Endothelial cell of umbilical vein (primary cell): ENCODE measurements at regions of chr7 and their contacts with region 1.

Region 1: GRCh38 chr7:137592232-137592896 is 248.8 kb upstream of the PTN start:
- DNase-seq: peak; percentile 85
- H3K4me3 ChIP-seq: no peak overlapping the region
- H3K27ac ChIP-seq: peak overlapping the region; percentile 83
- H3K4me1 ChIP-seq: peaks cover 10% of the 10 kb centered on the region
- H3K27me3 ChIP-seq: peaks cover 0 to 1% of the 10 kb centered on the region in 2 experiments
- CTCF ChIP-seq: peak; percentile 64 to 90
- POLR2A ChIP-seq: no peak

Region 2: GRCh38 chr7:135801045-135801693 is 1791.2 kb before region 1 on chr7:
- CTCF ChIA-PET with region 1: interaction called, 4 read pairs
- POLR2A ChIA-PET with region 1: no interaction called
- dilution Hi-C with region 1: no loop called
- intact Hi-C with region 1: loop called (anchors 5 kb)
- DNase-seq: peak; percentile 66
- H3K4me3 ChIP-seq: no peak overlapping the region
- H3K27ac ChIP-seq: no peak overlapping the region
- H3K4me1 ChIP-seq: no peaks in the 10 kb centered on the region
- H3K27me3 ChIP-seq: peaks cover 0 to 3% of the 10 kb centered on the region in 2 experiments
- CTCF ChIP-seq: peak; percentile 63 to 70
- POLR2A ChIP-seq: no peak

Region 3: DNA sequence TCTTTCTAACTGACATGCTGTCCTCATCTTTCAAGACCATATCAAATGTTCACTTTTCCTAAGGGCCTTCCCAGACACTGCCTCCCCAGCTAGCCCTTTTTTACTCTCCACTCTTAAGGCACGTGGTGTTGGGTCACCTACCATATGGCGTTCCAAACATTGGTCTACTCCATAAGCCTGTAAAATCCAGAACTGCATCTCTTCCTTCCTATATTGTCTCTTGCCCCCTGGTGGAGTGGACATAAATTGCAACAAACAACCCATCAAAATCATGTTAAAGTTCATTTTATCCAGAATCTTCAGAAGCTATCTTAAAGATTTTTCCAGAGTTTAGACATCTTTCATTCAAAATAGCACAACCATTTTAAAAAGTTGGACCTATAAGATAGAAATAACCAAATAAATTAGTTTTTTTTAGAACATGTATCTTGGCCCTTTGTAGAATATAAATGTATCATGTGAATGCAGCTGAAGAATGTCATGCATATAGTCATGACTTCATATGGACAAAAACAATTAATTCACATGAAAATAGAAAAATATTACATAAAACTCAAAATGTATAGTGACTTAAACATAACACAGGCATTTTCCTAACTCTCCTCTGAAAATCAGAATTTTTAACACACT is 904.6 kb before region 1 on chr7:
- CTCF ChIA-PET with region 1: no interaction called
- POLR2A ChIA-PET with region 1: no interaction called
- dilution Hi-C with region 1: no loop called
- intact Hi-C with region 1: loop called (anchors 5 kb)
- DNase-seq: peak; percentile 7
- H3K4me3 ChIP-seq: no peak overlapping the region
- H3K27ac ChIP-seq: no peak overlapping the region
- H3K4me1 ChIP-seq: no peaks in the 10 kb centered on the region
- H3K27me3 ChIP-seq: no peaks in the 10 kb centered on the region
- CTCF ChIP-seq: peak; percentile 30 to 31
- POLR2A ChIP-seq: no peak

Region 4: DNA sequence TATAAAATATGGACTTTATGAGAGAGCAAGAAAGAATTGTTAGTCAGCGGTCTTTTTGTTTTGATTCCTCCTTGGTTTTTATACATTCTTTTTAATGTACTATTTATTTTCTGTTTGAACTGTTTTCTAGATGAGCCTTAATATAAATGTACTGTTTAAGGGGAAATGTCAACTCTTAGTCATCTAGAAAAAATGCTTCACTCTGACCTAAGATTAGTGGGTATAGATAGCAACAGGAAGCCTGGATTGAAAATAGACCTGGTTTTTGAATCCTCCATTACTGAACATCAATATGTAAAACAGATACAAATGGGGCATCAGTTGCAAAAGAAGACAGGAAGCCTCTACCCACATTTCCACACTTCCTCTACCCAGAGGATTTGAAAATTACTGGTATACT is 636.1 kb before region 1 on chr7:
- CTCF ChIA-PET with region 1: no interaction called
- POLR2A ChIA-PET with region 1: no interaction called
- dilution Hi-C with region 1: no loop called
- intact Hi-C with region 1: loop called (anchors 5 kb)
- DNase-seq: no peak
- H3K4me3 ChIP-seq: peak overlapping the region in 1 of 3 experiments; percentile 35
- H3K27ac ChIP-seq: peak overlapping the region; percentile 93
- H3K4me1 ChIP-seq: peaks cover 46% of the 10 kb centered on the region
- H3K27me3 ChIP-seq: no peaks in the 10 kb centered on the region
- CTCF ChIP-seq: no peak
- POLR2A ChIP-seq: no peak

Region 5: GRCh38 chr7:137287651-137288258 is 304.6 kb before region 1 on chr7:
- CTCF ChIA-PET with region 1: no interaction called
- POLR2A ChIA-PET with region 1: no interaction called
- dilution Hi-C with region 1: no loop called
- intact Hi-C with region 1: loop called (anchors 5 kb)
- DNase-seq: peak; percentile 1
- H3K4me3 ChIP-seq: no peak overlapping the region
- H3K27ac ChIP-seq: no peak overlapping the region
- H3K4me1 ChIP-seq: no peaks in the 10 kb centered on the region
- H3K27me3 ChIP-seq: no peaks in the 10 kb centered on the region
- CTCF ChIP-seq: no peak
- POLR2A ChIP-seq: no peak

Region 6: DNA sequence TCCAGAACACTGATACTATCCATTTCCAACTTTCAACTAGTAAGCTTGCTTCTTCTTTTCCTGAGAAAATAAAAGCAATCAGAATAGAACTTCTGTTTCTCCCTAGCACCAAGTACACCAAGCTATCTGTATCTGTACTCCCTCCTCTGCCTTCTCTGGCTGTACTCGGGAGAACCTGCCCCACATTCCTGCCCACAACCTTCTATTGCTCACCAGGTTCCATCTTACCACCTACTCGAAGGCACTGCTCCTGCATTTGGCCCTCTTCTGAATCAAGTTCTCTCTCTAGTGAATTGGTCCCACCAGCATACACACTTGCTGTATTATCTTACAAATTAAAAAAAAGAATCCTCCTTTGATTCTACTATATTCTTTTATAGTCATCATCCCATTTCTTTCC is 79.3 kb before region 1 on chr7:
- CTCF ChIA-PET with region 1: no interaction called
- POLR2A ChIA-PET with region 1: no interaction called
- dilution Hi-C with region 1: no loop called
- intact Hi-C with region 1: loop called (anchors 1 kb)
- DNase-seq: no peak
- H3K4me3 ChIP-seq: no peak overlapping the region
- H3K27ac ChIP-seq: no peak overlapping the region
- H3K4me1 ChIP-seq: peaks cover 13% of the 10 kb centered on the region
- H3K27me3 ChIP-seq: no peaks in the 10 kb centered on the region
- CTCF ChIP-seq: no peak
- POLR2A ChIP-seq: no peak

Region 7: DNA sequence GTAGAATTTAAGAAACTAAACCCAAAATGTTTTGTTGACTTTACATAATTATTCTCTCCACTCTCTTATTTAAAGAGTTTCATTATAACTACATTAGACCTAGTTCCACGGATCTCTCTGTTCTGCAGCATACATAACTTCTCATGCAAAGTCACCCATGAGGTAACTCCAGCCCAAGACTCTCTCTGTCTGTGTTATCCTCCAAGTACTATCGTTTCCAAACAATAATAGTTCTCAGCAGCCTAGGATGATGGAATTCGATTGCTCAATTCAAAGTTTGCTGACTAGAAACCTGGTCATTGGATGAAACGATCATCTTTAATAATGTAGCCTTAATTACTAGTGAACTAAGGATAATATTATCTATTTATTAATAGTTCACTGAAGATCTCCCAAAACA is 45.7 kb before region 1 on chr7:
- CTCF ChIA-PET with region 1: no interaction called
- POLR2A ChIA-PET with region 1: no interaction called
- dilution Hi-C with region 1: no loop called
- intact Hi-C with region 1: no loop called
- DNase-seq: no peak
- H3K4me3 ChIP-seq: no peak overlapping the region
- H3K27ac ChIP-seq: no peak overlapping the region
- H3K4me1 ChIP-seq: no peaks in the 10 kb centered on the region
- H3K27me3 ChIP-seq: no peaks in the 10 kb centered on the region
- CTCF ChIP-seq: no peak
- POLR2A ChIP-seq: no peak

Region 8: DNA sequence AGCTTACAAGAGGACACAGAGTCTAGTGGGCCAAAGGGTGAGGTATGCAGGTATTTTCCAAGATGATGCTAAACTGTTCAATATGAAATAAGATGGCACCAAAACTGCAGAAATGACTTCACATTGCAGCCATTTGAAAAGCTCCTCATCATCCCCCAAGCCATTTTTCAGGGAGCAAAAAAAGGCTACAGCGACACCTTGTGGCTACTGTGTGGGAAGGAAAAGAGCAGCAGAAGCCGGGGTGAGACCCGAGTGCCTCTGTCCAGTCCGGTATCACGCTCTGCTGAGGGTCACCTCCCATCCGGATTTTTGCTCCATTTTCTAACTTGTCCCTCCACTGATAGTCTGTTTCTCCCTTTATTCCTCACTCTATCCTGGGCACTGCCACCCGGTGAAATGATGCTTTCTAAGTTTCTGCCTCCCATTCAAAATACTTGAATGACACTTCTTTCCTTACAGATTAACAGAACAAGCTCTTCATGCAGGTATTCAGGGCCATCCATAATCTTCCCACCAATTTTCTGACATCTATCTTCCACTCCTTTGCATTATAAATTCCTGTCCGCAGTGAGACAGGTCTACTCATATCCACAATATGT is 34.2 kb after region 1 on chr7:
- CTCF ChIA-PET with region 1: interaction called, 13 read pairs
- POLR2A ChIA-PET with region 1: no interaction called
- dilution Hi-C with region 1: no loop called
- intact Hi-C with region 1: no loop called
- DNase-seq: peak; percentile 54
- H3K4me3 ChIP-seq: no peak overlapping the region
- H3K27ac ChIP-seq: no peak overlapping the region
- H3K4me1 ChIP-seq: no peaks in the 10 kb centered on the region
- H3K27me3 ChIP-seq: peaks cover 1 to 10% of the 10 kb centered on the region in 2 experiments
- CTCF ChIP-seq: peak; percentile 78 to 92
- POLR2A ChIP-seq: no peak